Activated T-helper 2 cell treated with anti-CD3 and anti-CD28 coated beads, Interferon-gamma antibody, Interleukin-2, Interleukin-4, amounts not matched to agents 10 μg/mL and 5 μg/mL and 100 μg/mL, durations not matched to agents 14 hours and 24 hours and 36 hours (primary cell): ENCODE measurements at regions of chr21 and their contacts with region 1.

Region 1: DNA sequence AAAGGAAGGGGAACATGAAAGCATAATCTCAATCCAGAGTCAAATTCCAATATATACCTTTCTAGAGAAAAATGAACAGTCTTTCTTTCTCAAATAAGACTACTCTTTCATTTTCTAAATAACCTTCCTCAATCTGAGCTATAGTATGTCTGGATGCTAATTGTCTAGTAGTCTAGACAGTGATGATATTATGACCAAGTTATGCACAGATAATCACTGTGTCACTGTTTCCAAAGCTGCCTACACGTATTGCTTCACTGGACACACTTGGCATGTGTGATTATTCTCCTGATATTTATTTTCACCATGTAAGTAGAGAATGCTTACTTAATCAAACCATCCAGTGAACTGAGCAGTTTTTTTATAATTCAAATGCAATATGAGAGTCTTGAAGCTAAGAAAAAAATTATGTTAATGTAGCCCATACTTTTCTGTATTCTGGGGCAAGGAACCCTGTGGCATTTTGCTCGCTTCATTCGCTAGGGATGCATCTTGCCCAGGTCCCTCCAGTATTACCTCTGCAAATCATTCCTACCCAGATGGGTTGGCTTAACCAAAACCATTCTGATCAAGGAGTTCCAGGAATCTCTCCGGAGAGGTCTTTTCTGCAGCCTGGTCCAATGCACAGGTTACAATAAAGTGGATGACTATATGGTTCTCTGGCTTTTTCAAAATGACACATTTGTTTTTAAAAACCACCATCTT is 303.1 kb upstream of the RUNX1 start:
- DNase-seq: no peak
- H3K4me3 Mint-ChIP-seq: no peak overlapping the region
- H3K27ac Mint-ChIP-seq: no peak overlapping the region
- H3K4me1 Mint-ChIP-seq: peaks cover 51% of the 10 kb centered on the region
- H3K27me3 Mint-ChIP-seq: no peaks in the 10 kb centered on the region

Region 2: DNA sequence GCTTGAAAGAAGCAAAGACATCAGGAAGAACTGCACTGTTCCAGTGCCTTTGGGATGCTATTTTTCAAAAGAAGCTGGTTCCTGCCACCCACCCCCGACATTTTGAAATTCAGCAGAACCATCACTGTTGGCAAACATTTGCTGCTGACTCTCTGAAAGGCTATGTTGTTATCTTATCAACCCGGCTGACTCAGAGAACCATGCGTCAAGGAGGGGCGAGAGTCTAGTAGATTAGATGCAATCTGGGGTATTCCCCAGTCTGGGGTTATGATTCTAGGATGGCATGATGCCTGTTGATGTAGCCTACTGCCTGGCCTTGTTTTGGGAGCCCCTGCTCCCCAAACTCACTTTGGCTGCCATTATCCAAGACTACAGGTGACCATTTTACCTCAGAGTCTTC is 35.3 kb before region 1 on chr21:
- intact Hi-C with region 1: loop called (anchors 5 kb)
- DNase-seq: no peak
- H3K4me3 Mint-ChIP-seq: no peak overlapping the region
- H3K27ac Mint-ChIP-seq: peak overlapping the region; percentile 40
- H3K4me1 Mint-ChIP-seq: peaks cover 27% of the 10 kb centered on the region
- H3K27me3 Mint-ChIP-seq: no peaks in the 10 kb centered on the region

Region 3: DNA sequence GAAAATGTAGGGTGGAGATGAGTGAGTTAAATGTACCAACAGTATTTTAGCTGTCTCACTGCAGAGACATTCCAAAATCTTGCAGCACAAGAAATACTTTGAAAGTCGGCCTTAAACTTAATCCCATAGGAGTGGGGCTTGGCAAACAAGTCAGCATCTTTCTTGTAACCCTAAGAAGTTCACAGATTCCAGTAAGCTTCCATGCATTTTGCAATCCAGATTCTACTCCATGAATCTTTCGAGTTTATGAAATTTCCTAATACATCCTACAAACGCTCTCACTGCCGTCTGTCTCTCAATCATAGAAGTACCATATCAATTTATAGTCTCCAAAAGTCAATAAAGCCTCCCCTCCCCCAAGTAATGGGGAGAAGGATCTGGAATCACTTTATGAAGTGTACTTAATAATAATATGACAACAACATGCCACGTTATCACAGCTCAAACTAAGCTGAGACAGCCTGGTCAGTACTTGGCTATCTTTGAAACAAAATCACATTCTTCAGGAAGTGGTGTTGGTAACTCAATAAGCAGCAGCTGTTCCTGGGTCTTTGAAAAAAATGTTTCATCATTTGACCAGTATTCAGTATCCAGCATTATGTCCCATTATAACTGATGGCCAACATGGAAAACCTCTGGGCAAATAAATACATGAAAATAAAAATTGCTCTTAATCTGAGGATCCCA is 14.3 kb after region 1 on chr21:
- intact Hi-C with region 1: no loop called
- DNase-seq: no peak
- H3K4me3 Mint-ChIP-seq: no peak overlapping the region
- H3K27ac Mint-ChIP-seq: no peak overlapping the region
- H3K4me1 Mint-ChIP-seq: no peaks in the 10 kb centered on the region
- H3K27me3 Mint-ChIP-seq: no peaks in the 10 kb centered on the region